Breast epithelium (tissue), 4 donors: ENCODE measurements at regions of chr14 and their contacts with region 1.

Region 1: DNA sequence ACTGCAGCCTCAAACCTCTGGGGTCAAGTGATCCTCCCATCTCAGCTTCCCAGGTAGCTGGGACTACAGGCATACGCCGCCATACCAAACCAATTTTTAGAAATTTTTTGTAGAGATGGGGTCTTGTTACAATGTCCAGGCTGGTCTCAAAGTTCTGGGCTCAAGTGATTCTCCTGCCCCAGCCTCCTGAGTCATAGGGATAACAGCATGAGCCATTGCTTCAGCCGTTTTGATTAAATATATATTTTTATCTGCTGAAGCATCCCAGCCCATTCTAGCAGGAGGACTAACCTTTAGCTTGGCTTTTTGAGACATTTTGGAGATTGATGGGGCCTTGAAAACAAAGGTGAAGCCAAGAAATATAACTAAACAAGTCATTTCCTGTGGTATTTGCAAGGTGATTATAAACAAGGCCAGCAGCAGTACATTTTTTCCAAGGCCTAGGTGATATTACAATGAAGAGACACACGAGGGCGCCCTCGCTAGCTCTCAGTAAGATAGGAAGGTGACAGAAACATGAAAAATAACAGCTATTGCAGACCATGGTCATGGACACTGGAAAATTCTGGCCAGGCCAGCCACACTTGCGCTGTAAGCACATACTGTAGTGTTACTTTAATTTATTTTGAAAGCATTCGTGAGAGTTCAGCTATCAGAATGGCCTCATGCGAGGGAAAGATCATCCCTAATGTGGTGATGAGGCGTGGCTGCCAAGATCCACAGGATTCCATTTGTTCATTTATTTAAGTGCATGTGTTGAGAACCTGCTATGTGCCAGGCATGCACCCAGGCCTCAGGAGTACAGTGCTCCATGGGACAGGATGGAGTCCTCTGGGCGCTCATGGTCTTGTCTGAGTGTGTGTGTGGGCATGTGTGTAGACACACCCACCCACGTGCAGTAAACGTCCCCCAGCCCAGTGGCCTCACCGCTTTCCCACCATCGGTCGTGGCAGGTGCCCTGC is 63.5 kb downstream of the DGLUCY start:
- DNase-seq: peak in 1 of 2 donors; percentile 41
- H3K4me3 ChIP-seq: no peak overlapping the region
- H3K27ac ChIP-seq: no peak overlapping the region
- H3K4me1 ChIP-seq: no peaks in the 10 kb centered on the region
- H3K27me3 ChIP-seq: no peaks in the 10 kb centered on the region
- CTCF ChIP-seq: peak; percentile 21 to 82 (median 69)
- POLR2A ChIP-seq: no peak

Region 2: GRCh38 chr14:91286530-91286937 is 109.2 kb after region 1 on chr14:
- intact Hi-C with region 1: loop called (anchors 2 kb)
- DNase-seq: peak; percentile 65 to 75
- H3K4me3 ChIP-seq: no peak overlapping the region
- H3K27ac ChIP-seq: no peak overlapping the region
- H3K4me1 ChIP-seq: no peaks in the 10 kb centered on the region
- H3K27me3 ChIP-seq: no peaks in the 10 kb centered on the region
- CTCF ChIP-seq: peak; percentile 88 to 91 (median 91)
- POLR2A ChIP-seq: no peak

Region 3: DNA sequence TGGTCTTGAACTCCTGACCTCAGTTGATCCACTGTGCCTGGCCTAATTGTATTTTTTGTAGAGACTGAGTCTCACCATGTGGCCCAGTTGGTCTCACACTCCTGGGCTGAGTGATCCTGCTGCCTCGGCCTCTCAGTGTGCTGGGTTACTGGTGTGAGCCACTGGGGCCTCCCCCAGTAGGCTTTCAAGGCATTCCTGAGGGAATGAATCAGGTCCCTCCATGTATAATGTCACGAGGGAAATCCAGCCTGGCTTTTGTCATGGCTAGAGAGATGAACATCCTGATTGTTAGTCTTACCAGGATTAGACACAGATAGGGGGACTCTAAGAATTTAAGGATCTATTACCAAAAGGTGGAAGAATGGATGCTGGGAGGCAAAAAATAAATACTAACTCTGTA is 996.3 kb after region 1 on chr14:
- intact Hi-C with region 1: loop called (anchors 5 kb)
- DNase-seq: no peak
- H3K4me3 ChIP-seq: no peak overlapping the region
- H3K27ac ChIP-seq: no peak overlapping the region
- H3K4me1 ChIP-seq: no peaks in the 10 kb centered on the region
- H3K27me3 ChIP-seq: no peaks in the 10 kb centered on the region
- CTCF ChIP-seq: no peak
- POLR2A ChIP-seq: no peak